CD8-positive, alpha-beta T cell (primary cell): ENCODE measurements at regions of chr9 and their contacts with region 1.

Region 1: GRCh38 chr9:78369639-78370219 is 72.8 kb downstream of the PSAT1 start:
- DNase-seq: peak; percentile 6 to 69 (median 50)
- ATAC-seq: no peak
- H3K4me3 ChIP-seq: no peak overlapping the region
- H3K4me3 Mint-ChIP-seq: no peak overlapping the region
- H3K27ac ChIP-seq: no peak overlapping the region
- H3K27ac Mint-ChIP-seq: no peak overlapping the region
- H3K4me1 ChIP-seq: no peaks in the 10 kb centered on the region
- H3K4me1 Mint-ChIP-seq: no peaks in the 10 kb centered on the region
- H3K27me3 ChIP-seq: no peaks in the 10 kb centered on the region
- H3K27me3 Mint-ChIP-seq: peaks cover 9% of the 10 kb centered on the region
- CTCF ChIP-seq: peak; percentile 74

Region 2: DNA sequence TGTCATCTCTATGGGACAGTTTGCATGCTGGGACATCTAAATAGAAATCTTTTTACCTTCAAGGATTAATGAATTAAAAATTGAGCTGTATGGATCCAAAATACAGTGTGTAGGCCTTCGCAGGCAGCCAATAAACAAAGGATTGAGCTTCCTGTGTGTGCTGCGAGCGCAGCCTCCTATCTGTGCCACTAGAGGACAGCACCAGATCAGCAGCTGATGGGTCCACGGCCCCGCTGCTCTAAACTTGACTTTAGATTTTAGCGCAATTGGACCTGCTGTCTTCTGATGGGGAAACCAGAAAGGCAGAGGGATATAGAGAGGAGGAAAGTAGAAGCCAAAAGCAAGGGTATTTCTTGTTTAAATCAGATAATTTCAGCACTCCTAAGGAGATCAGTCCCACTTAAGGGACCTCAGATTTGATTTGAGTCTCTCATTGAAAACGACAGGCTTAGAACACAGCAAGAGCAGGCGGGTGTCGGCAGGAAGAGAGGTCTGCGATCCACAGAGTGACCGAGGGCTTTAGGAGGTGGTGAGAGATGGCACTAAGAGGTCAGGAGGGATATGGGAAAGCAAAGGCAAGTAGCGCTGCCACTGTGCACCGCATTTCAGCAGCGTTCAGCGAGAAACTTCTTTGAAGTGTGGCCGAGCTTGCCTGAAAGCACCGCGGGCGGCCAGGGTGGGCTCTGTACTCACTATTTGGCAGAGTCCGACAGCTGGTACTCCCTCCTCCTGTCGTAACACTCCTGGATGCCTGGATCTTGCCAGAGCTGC is 935.9 kb before region 1 on chr9:
- CTCF ChIA-PET with region 1: interaction called, 4 read pairs
- POLR2A ChIA-PET with region 1: no interaction called
- intact Hi-C with region 1: loop called (anchors 2 kb)
- DNase-seq: peak in 7 of 9 experiments; percentile 9 to 59 (median 46)
- ATAC-seq: peak; percentile 70
- H3K4me3 ChIP-seq: no peak overlapping the region
- H3K4me3 Mint-ChIP-seq: no peak overlapping the region
- H3K27ac ChIP-seq: no peak overlapping the region
- H3K27ac Mint-ChIP-seq: no peak overlapping the region
- H3K4me1 ChIP-seq: no peaks in the 10 kb centered on the region
- H3K4me1 Mint-ChIP-seq: peaks cover 2% of the 10 kb centered on the region
- H3K27me3 ChIP-seq: no peaks in the 10 kb centered on the region
- H3K27me3 Mint-ChIP-seq: peaks cover 8% of the 10 kb centered on the region
- CTCF ChIP-seq: peak; percentile 88

Region 3: DNA sequence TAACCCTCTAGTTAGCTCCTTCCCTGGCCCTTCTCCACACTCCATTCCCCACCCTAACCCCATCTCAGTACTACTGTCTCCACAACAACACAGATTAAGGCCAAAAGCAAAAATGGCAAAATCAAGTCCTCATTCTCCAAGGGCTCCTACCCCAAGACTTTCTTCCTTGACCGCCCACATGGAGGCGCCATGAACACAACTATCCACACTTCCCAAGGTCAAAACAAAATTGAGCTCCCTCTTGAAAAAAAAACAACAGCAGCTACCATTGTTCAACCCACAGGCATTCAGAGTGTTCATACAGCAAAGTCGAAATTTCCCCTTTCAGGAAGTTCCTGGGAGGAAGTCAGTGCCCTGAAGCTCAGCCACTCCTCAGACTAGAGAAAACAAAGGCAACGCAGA is 392.5 kb before region 1 on chr9:
- CTCF ChIA-PET with region 1: no interaction called
- POLR2A ChIA-PET with region 1: no interaction called
- intact Hi-C with region 1: loop called in 1 of 2 experiments (anchors 5 kb)
- DNase-seq: peak in 8 of 9 experiments; percentile 19 to 73 (median 45)
- ATAC-seq: peak; percentile 53
- H3K4me3 ChIP-seq: no peak overlapping the region
- H3K4me3 Mint-ChIP-seq: peak overlapping the region; percentile 60
- H3K27ac ChIP-seq: peak overlapping the region in 1 of 2 experiments; percentile 68
- H3K27ac Mint-ChIP-seq: peak overlapping the region; percentile 78
- H3K4me1 ChIP-seq: peaks cover 48% of the 10 kb centered on the region
- H3K4me1 Mint-ChIP-seq: peaks cover 54% of the 10 kb centered on the region
- H3K27me3 ChIP-seq: no peaks in the 10 kb centered on the region
- H3K27me3 Mint-ChIP-seq: no peaks in the 10 kb centered on the region
- CTCF ChIP-seq: no peak

Region 4: DNA sequence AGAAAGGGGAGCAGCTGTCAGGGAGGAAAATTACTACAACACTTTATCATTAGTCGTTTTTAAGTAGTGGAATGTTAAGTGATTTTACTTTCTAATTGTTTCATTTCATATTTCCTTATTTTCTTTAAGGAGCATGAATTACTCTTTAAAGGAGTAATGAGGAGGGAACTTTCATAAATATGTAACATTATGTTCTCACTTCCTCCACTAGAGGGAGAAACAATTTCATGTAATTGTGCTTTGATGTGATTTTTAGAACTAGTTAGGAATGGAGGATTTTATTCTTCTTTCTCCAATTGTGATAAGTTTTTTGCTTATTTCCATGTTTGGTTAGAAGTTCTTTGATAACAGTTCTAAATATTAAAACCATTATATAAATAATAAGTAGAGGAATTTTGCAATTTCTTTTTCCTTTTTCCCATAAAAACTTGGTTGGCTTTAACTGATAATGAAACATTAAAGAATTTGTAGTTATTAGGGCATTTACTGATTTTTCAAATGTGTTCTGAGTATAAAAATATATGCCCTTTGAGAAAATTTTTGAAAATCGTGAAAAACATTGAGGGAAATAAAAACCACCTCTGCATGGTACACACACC is 108.2 kb before region 1 on chr9:
- CTCF ChIA-PET with region 1: interaction called, 79 read pairs
- POLR2A ChIA-PET with region 1: no interaction called
- intact Hi-C with region 1: loop called (anchors 1 kb)
- DNase-seq: peak in 2 of 9 experiments; percentile 33 to 53
- ATAC-seq: peak; percentile 36
- H3K4me3 ChIP-seq: no peak overlapping the region
- H3K4me3 Mint-ChIP-seq: no peak overlapping the region
- H3K27ac ChIP-seq: no peak overlapping the region
- H3K27ac Mint-ChIP-seq: no peak overlapping the region
- H3K4me1 ChIP-seq: no peaks in the 10 kb centered on the region
- H3K4me1 Mint-ChIP-seq: no peaks in the 10 kb centered on the region
- H3K27me3 ChIP-seq: no peaks in the 10 kb centered on the region
- H3K27me3 Mint-ChIP-seq: no peaks in the 10 kb centered on the region
- CTCF ChIP-seq: peak; percentile 80

Region 5: DNA sequence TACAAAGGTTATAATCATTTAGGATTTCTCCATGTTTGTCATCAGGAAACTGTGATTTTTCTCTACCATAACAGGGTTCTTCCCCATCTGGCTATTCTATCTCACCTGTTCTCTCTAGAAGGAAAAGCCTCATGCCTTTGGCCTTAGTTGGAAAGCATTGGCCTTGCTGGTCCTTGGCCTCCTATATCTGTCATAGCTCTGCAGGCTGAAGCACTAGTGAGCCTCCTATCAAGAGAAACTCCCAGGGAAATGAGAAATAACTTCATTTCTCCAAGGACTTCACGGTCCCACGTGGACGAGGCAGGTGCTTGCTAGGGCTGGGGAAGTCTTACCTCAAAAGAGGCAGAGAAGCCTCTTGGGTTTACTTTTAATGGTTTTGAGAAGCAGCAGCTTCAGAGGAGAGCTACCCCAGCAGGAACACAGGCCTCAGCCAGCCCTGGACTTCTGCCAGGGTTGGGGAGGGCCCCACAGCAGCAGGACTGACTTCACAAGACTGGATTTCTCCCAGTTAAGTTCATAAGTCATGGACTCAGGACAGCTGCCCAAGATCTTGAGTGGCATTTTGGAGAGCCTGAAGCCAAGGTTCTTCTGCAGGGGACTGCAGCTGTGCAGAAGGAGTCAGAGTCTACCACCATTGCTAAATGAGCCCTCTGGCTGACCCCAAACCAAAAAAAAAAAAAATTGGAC is 88.6 kb before region 1 on chr9:
- CTCF ChIA-PET with region 1: no interaction called
- POLR2A ChIA-PET with region 1: no interaction called
- intact Hi-C with region 1: no loop called
- DNase-seq: no peak
- ATAC-seq: no peak
- H3K4me3 ChIP-seq: no peak overlapping the region
- H3K4me3 Mint-ChIP-seq: no peak overlapping the region
- H3K27ac ChIP-seq: no peak overlapping the region
- H3K27ac Mint-ChIP-seq: no peak overlapping the region
- H3K4me1 ChIP-seq: no peaks in the 10 kb centered on the region
- H3K4me1 Mint-ChIP-seq: peaks cover 9% of the 10 kb centered on the region
- H3K27me3 ChIP-seq: no peaks in the 10 kb centered on the region
- H3K27me3 Mint-ChIP-seq: no peaks in the 10 kb centered on the region
- CTCF ChIP-seq: no peak

Region 6: DNA sequence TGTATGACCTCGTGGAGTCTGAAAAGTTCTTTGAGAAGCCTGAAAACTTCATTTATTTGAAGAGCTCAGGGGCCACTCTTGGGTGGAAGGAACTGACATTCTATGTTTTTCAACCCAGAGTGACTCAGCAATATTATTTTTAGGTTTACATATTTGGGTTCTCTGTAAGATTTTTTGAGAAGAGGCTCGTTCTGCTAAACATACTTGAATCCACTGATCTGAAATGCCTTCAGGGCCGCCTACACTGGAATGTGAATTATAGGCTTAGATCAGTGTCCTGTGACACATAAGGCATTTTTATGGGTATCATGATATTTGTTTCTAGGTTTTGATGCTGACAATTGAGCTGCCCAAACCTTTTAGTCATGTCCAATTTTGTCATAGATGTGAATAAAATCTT is 13.4 kb after region 1 on chr9:
- CTCF ChIA-PET with region 1: interaction called, 19 read pairs
- POLR2A ChIA-PET with region 1: no interaction called
- intact Hi-C with region 1: no loop called
- DNase-seq: no peak
- ATAC-seq: no peak
- H3K4me3 ChIP-seq: no peak overlapping the region
- H3K4me3 Mint-ChIP-seq: no peak overlapping the region
- H3K27ac ChIP-seq: no peak overlapping the region
- H3K27ac Mint-ChIP-seq: no peak overlapping the region
- H3K4me1 ChIP-seq: no peaks in the 10 kb centered on the region
- H3K4me1 Mint-ChIP-seq: no peaks in the 10 kb centered on the region
- H3K27me3 ChIP-seq: no peaks in the 10 kb centered on the region
- H3K27me3 Mint-ChIP-seq: peaks cover 6% of the 10 kb centered on the region
- CTCF ChIP-seq: no peak

Region 7: DNA sequence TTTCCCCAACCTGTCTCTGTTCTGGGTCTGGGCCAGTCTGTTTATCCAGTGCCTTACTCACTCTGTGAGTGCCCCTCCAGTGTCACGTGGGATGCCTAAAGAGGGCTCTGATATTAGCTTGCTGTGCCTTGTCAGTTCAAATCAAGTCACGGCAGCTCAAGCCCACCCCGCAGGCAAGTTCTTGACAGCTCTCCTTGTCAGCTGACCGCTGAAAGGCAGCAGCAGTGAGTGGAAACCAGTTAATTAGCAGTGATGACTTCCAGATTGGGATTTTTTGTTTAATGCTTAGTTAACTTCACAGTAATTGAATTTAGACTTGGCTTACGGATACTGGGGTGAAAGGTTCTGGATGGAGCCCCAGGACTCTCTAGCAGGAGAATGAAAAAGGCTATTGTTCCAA is 137.3 kb after region 1 on chr9:
- CTCF ChIA-PET with region 1: no interaction called
- POLR2A ChIA-PET with region 1: no interaction called
- intact Hi-C with region 1: no loop called
- DNase-seq: no peak
- ATAC-seq: no peak
- H3K4me3 ChIP-seq: no peak overlapping the region
- H3K4me3 Mint-ChIP-seq: no peak overlapping the region
- H3K27ac ChIP-seq: no peak overlapping the region
- H3K27ac Mint-ChIP-seq: no peak overlapping the region
- H3K4me1 ChIP-seq: no peaks in the 10 kb centered on the region
- H3K4me1 Mint-ChIP-seq: no peaks in the 10 kb centered on the region
- H3K27me3 ChIP-seq: no peaks in the 10 kb centered on the region
- H3K27me3 Mint-ChIP-seq: peaks cover 4% of the 10 kb centered on the region
- CTCF ChIP-seq: no peak